Psoas muscle (tissue), 8 donors: ENCODE measurements at regions of chr6 and their contacts with region 1.

Region 1: GRCh38 chr6:158475344-158476302 is 84.3 kb upstream of the TMEM181 start:
- DNase-seq: no peak
- ATAC-seq: peak in 2 of 4 donors; percentile 10 to 17
- H3K4me3 ChIP-seq: no peak overlapping the region
- H3K27ac ChIP-seq: no peak overlapping the region
- H3K4me1 ChIP-seq: no peaks in the 10 kb centered on the region
- H3K27me3 ChIP-seq: no peaks in the 10 kb centered on the region
- CTCF ChIP-seq: no peak

Region 2: DNA sequence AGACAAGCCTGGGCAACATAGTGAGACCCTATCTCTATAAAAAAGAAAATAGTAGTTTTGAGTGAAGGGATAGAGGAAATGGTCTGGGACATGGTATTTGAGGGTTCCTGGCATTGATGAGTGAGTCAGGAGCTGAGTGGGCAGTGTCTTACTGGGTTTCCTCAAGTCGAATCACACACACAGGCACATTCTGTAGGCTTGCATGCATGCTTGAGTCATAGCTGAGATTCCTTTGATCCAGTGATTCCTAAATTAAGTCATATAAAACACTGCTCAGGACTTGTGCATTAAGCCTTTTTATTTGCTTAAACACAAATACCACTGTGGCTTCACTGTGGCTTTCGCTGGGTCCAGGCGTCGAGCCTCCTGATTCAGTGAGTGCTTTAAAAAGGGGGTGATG is 12.4 kb after region 1 on chr6:
- intact Hi-C with region 1: loop called in 1 of 2 experiments (anchors 1 kb)
- DNase-seq: no peak
- ATAC-seq: peak in 1 of 4 donors; percentile 48
- H3K4me3 ChIP-seq: no peak overlapping the region
- H3K27ac ChIP-seq: no peak overlapping the region
- H3K4me1 ChIP-seq: no peaks in the 10 kb centered on the region
- H3K27me3 ChIP-seq: no peaks in the 10 kb centered on the region
- CTCF ChIP-seq: no peak